Ovary (tissue), 10 donors: ENCODE measurements at regions of chr5 and their contacts with region 1.

Region 1: GRCh38 chr5:9350301-9350797 is 195.5 kb downstream of the SEMA5A start:
- DNase-seq: no peak
- H3K4me3 ChIP-seq: no peak overlapping the region
- H3K27ac ChIP-seq: no peak overlapping the region
- H3K4me1 ChIP-seq: no peaks in the 10 kb centered on the region
- H3K27me3 ChIP-seq: no peaks in the 10 kb centered on the region
- CTCF ChIP-seq: no peak
- EP300 ChIP-seq: no peak
- POLR2A ChIP-seq: no peak

Region 2: GRCh38 chr5:8316607-8317280 is 1033.6 kb before region 1 on chr5:
- intact Hi-C with region 1: no loop called
- DNase-seq: no peak
- H3K4me3 ChIP-seq: no peak overlapping the region
- H3K27ac ChIP-seq: no peak overlapping the region
- H3K4me1 ChIP-seq: no peaks in the 10 kb centered on the region
- H3K27me3 ChIP-seq: no peaks in the 10 kb centered on the region
- CTCF ChIP-seq: no peak
- EP300 ChIP-seq: no peak
- POLR2A ChIP-seq: no peak

Region 3: GRCh38 chr5:9009931-9010651 is 340.3 kb before region 1 on chr5:
- intact Hi-C with region 1: loop called in 1 of 4 experiments (anchors 2 kb)
- DNase-seq: no peak
- H3K4me3 ChIP-seq: no peak overlapping the region
- H3K27ac ChIP-seq: no peak overlapping the region
- H3K4me1 ChIP-seq: no peaks in the 10 kb centered on the region
- H3K27me3 ChIP-seq: no peaks in the 10 kb centered on the region
- CTCF ChIP-seq: no peak
- EP300 ChIP-seq: no peak
- POLR2A ChIP-seq: no peak